ENCODE measurements at regions of chr12 and their contacts with region 1.

Region 1: DNA sequence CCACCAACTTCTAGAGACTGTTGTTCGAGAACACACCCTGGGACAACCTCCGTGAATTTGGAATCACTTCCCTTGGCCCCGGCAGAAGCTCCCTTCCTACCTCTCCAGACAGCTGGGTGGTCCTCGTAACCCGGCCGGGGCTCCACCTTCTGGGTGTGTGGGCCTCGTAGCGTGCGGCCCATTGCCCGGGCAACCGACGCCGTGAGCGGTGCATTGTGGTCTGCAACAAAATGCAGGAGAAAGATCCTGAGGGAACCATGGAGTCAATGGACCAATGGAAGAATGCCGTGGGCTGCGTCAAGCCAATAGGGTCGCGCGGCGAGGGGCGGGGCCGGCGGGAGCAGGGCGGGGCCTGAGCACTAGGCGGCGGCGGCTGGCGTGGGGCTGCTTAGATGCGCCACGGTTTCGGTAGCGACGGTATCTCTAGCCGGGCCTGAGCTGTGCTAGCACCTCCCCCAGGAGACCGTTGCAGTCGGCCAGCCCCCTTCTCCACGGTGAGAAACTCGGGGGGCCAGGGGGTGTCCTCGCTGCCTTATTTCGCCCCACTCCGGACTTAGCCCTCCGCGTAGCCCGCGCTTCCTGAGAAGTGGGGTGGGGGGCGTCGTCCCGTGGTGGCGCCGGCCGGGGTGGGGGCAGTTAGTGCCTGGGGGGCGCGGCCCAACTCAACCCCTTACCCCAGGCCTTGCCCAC is at the start of gene DYNLL1:
- DNase-seq: peak; percentile 94
- ATAC-seq: peak; percentile 97
- H3K4me3 ChIP-seq: peak within 1 kb of the TSS; percentile 76
- H3K27ac ChIP-seq: peak within 1 kb of the TSS; percentile 78
- H3K4me1 ChIP-seq: peaks cover 1% of the 10 kb centered on the region
- H3K27me3 ChIP-seq: no peaks in the 10 kb centered on the region
- CTCF ChIP-seq: no peak
- POLR2A ChIP-seq: peak; percentile 95
- RAD21 ChIP-seq: no peak
- total RNA-seq, gene DYNLL1: 696 and 709 TPM in 2 replicates

Region 2: DNA sequence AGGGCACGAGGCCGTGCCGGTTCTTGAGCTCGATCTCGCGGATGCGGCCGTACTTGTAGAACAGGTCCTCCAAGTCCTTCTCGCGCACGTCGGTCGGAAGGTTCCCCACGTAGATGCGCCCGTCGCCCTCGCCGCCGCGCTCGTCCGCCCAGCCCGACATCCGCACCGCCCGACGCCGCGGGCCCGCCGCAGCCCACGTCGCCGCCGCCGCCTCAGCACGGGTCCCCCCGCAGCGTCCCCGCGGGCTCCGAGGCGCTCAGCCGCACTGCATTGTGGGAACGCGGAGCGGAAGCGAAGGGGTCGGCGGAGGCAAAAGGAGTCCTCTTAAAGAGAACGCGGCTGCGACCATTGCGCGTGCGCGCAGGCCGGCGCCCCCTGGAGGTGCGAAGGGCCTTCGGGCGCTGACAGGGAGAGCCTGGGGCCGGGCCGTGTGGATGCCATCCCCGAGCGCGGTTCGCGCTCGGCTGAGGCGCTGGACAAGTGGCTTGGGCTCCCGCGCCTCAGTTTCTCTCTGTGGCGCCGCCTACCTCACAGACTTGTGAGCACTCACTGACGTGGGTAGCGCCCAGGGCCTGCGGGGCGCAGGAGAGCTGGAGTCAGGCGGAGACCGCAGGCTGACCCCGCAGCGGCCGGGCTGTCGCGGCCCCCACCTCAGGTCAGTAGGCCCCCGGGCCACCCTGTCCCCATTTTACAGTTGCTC is 26.3 kb before region 1 on chr12 and contains the start of gene SRSF9:
- CTCF ChIA-PET with region 1: interaction called, 5 read pairs
- POLR2A ChIA-PET with region 1: no interaction called
- dilution Hi-C with region 1: no loop called
- in situ Hi-C with region 1: no loop called
- intact Hi-C with region 1: loop called (anchors 1 kb)
- DNase-seq: peak; percentile 96
- ATAC-seq: peak; percentile 93
- H3K4me3 ChIP-seq: peak within 1 kb of the TSS; percentile 80
- H3K27ac ChIP-seq: peak within 1 kb of the TSS; percentile 91
- H3K4me1 ChIP-seq: peaks cover 4% of the 10 kb centered on the region; the same call in 1 of the 2 replicates
- H3K27me3 ChIP-seq: no peaks in the 10 kb centered on the region
- CTCF ChIP-seq: peak; percentile 98
- POLR2A ChIP-seq: peak; percentile 62; the same call in 1 of the 2 replicates
- RAD21 ChIP-seq: peak; percentile 32; the same call in 1 of the 2 replicates
- total RNA-seq, gene SRSF9: 102 and 196 TPM in 2 replicates

Region 3: DNA sequence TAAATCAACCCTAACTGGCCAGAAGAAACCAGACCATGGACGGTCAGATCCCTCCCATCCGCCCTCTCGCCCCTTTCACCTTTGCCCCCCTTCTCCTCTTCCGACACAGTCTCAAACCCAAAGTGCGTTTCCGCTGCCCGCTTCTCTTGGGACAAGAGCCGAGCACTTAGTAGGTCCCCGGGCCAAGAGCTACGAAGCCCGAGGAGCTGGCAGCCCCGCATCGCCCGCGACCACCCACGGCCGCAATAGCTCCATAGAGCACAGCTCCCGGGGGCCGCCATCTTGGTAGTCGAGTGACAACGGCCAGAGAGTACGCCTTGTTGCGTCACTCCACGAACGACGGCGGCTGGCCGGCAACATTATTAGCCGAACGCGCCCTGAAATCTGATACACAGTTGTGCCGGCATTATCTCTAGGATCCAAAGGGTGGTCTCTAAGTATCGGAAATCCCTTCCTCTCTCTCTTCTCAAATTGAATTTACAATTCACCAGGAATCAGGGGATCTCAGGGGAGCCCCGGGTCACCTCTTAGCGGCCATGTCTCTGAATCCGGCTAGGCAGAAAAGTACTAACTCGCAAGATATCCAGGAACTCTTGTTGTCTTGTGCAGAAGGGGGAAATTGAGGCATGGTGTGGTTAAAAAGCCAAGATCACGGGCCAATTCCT is 33.1 kb after region 1 on chr12 and contains the start of gene COQ5:
- CTCF ChIA-PET with region 1: no interaction called
- POLR2A ChIA-PET with region 1: no interaction called
- dilution Hi-C with region 1: no loop called
- in situ Hi-C with region 1: no loop called
- intact Hi-C with region 1: loop called (anchors 2 kb)
- DNase-seq: peak; percentile 83
- ATAC-seq: peak; percentile 96
- H3K4me3 ChIP-seq: peak within 1 kb of the TSS; percentile 86
- H3K27ac ChIP-seq: peak within 1 kb of the TSS; percentile 95
- H3K4me1 ChIP-seq: peaks cover 2% of the 10 kb centered on the region; the same call in 1 of the 2 replicates
- H3K27me3 ChIP-seq: no peaks in the 10 kb centered on the region
- CTCF ChIP-seq: no peak
- POLR2A ChIP-seq: peak; percentile 82
- RAD21 ChIP-seq: no peak
- total RNA-seq, gene COQ5: 25.1 and 29.4 TPM in 2 replicates

Region 4: DNA sequence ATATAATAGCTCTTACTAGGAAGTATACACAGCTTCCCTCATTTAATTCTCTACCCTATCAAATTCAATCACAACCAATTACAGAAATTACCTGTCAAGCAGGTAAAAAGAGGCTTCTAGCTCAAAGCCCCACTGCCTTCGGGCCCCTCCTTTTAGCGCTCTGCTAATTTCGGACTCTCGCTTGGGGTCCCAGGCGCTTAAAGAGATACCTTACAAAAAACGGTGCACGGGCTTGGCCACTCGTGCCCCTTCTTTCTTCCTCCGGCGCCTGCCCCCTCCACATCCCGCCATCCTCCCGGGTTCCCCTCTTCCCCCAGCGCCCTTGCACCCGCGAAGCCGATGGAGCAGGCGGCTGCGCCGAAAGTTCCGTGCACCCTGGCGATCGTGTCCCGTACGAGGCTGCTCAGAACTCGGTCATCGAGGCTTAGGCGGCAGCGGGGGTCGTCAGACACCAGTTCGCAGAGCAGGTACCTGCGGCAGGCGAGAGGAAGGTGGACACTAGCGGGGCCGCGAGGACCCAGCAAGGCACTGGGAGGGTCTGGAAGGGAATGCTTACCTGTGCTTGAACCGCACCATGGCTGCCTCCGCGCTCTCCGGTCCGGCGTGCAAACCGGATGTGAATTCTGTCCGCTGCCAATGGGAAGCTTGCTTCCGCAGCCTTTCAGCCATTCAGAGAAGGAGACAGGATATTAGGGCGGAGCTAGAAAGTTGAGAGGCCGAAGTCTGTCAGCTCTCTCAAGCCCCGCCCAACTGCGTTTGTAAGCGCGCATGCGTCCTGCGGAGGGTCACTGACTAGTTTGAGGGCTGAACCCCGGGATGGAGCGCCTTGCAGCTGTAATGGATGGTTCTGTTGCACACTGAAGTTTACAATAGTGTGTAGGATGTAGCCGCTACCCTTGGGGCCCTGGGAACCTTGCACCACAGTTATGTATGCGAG is 85.2 kb after region 1 on chr12 and contains the start of gene POP5:
- CTCF ChIA-PET with region 1: no interaction called
- POLR2A ChIA-PET with region 1: no interaction called
- dilution Hi-C with region 1: no loop called
- in situ Hi-C with region 1: no loop called
- intact Hi-C with region 1: no loop called
- DNase-seq: peak; percentile 96
- ATAC-seq: peak; percentile 95
- H3K4me3 ChIP-seq: peak within 1 kb of the TSS; percentile 67
- H3K27ac ChIP-seq: peak within 1 kb of the TSS; percentile 62
- H3K4me1 ChIP-seq: no peaks in the 10 kb centered on the region
- H3K27me3 ChIP-seq: peaks cover 10% of the 10 kb centered on the region; the same call in 1 of the 2 replicates
- CTCF ChIP-seq: no peak
- POLR2A ChIP-seq: no peak
- RAD21 ChIP-seq: no peak
- total RNA-seq, gene POP5: 66.1 and 69.5 TPM in 2 replicates

Region 5: GRCh38 chr12:120818416-120818815 is 322.5 kb after region 1 on chr12:
- CTCF ChIA-PET with region 1: no interaction called
- POLR2A ChIA-PET with region 1: no interaction called
- dilution Hi-C with region 1: no loop called
- in situ Hi-C with region 1: no loop called
- intact Hi-C with region 1: no loop called
- DNase-seq: no peak
- ATAC-seq: no peak
- H3K4me3 ChIP-seq: no peak overlapping the region
- H3K27ac ChIP-seq: no peak overlapping the region
- H3K4me1 ChIP-seq: no peaks in the 10 kb centered on the region
- H3K27me3 ChIP-seq: no peaks in the 10 kb centered on the region
- CTCF ChIP-seq: no peak
- POLR2A ChIP-seq: no peak
- RAD21 ChIP-seq: no peak

Measured in IMR-90 (cell line).